Activated T-helper 2 cell treated with anti-CD3 and anti-CD28 coated beads, Interferon-gamma antibody, Interleukin-2, Interleukin-4, amounts not matched to agents 10 μg/mL and 5 μg/mL and 100 μg/mL, durations not matched to agents 14 hours and 24 hours and 36 hours (primary cell): ENCODE measurements at regions of chr9 and their contacts with region 1.

Region 1: DNA sequence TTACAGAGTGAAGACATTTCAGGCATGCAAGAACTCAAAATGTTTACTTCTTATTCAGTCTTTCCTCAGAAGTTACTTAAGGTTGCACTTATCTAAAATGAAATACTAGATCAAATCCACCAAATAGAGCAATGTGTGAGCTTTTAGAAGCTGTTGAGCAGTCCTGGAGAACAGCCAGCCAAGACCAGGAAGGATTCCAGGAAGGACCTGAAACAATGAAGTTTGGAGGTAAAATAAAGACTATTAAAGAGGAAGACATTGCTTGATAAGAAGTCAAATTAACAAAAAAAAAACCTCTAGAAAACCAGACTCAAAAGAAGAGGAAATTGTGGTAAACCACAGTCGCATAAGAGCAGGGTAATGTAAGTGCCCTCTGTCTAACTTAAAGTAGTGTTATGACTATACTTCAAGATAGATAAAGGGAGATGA is 156.2 kb upstream of the S1PR3 start:
- DNase-seq: no peak
- H3K4me3 Mint-ChIP-seq: no peak overlapping the region
- H3K27ac Mint-ChIP-seq: no peak overlapping the region
- H3K4me1 Mint-ChIP-seq: peaks cover 19% of the 10 kb centered on the region
- H3K27me3 Mint-ChIP-seq: peaks cover 69% of the 10 kb centered on the region

Region 2: DNA sequence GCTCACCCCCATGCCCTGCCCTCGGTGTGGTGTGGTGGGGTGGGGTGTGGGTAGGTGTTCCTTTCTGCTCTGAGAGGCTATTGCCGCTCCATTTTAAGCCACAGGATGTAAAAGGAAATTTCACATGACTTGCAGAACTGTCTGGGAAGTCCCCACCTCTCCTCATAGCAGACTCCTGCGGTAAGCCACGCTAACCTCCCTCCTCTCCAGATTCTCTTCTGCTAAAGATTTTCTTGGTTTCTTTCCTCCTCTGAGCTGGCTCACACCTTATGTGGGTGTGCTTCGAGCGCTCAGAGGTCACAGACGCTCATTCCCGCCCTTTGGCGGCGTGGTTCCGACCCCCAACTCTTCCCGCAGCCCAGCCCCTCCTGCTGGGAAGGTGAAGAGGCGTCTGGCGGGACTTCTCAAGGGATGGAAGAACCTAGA is 827.8 kb before region 1 on chr9:
- intact Hi-C with region 1: loop called (anchors 10 kb)
- DNase-seq: no peak
- H3K4me3 Mint-ChIP-seq: no peak overlapping the region
- H3K27ac Mint-ChIP-seq: no peak overlapping the region
- H3K4me1 Mint-ChIP-seq: peaks cover 7% of the 10 kb centered on the region
- H3K27me3 Mint-ChIP-seq: peaks cover 12% of the 10 kb centered on the region

Region 3: DNA sequence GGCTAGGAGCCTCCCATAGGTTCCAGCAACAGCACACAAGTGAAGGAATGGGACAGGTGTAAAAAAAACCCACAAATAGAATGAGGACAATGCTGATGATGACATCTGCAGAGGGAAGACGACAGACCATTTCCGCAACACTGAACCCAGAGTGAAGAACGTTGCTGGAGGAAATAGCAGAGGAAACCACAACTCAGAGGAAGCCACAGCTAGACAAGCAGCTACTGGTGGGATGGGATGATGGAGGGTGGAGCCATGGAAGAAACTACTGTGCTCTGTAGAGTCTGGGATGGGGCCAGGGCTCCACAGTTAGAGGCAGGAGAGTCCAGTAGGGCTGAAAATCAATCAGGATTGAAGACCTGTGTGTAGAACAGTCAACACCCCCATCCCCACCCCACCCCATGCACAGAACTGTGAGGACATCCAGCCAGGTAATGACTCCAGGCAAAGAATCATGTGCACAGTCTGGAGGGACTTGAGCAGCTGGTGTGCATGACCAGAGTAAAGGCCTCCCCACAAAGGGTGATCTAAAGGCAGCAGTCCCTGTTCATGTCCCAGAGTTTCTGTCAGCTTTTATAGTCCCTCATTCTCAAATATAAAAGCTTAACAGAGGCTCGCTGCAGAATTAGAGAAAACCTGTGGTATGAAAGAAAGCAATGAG is 512.0 kb before region 1 on chr9:
- intact Hi-C with region 1: loop called (anchors 10 kb)
- DNase-seq: peak; percentile 71
- H3K4me3 Mint-ChIP-seq: peak overlapping the region; percentile 1
- H3K27ac Mint-ChIP-seq: peak overlapping the region; percentile 83
- H3K4me1 Mint-ChIP-seq: peaks cover 46% of the 10 kb centered on the region
- H3K27me3 Mint-ChIP-seq: peaks cover 6% of the 10 kb centered on the region

Region 4: DNA sequence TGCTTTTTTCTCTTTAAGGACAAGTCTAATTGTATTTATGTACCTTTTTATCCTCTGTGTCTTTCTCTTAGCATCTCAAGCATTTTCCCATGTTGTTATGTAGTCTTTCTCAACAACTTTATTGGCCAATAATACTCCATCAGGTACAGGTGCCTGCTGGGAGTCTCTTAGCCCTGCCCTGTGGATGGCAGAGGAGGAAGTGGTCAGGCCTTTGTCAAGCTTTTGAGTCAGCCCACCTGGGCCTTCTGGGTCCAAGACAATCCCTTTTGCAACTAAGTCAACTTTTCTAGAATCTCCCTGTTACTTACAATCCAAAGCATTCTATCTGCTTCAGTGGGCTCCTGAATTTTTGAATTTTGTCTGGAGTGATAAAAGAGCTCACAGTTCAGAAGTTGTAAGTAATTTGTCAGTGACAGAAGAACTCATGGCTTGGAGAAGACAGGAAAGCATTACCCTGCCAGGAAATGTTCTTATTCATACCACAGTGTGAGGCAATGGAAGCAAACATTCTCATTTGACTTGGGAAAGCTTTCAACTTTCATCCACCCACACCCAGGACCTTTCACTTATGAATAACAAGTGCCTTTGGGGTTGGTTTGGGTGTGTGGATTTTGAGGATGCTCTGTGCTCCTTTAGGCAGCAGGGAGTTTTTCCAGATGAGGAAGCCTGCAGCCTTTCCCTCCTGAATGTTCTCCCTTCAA is 43.8 kb before region 1 on chr9:
- intact Hi-C with region 1: no loop called
- DNase-seq: no peak
- H3K4me3 Mint-ChIP-seq: no peak overlapping the region
- H3K27ac Mint-ChIP-seq: no peak overlapping the region
- H3K4me1 Mint-ChIP-seq: peaks cover 12% of the 10 kb centered on the region
- H3K27me3 Mint-ChIP-seq: peaks cover 7% of the 10 kb centered on the region

Region 5: GRCh38 chr9:88988796-88989560 is 153.9 kb after region 1 on chr9:
- intact Hi-C with region 1: loop called (anchors 5 kb)
- DNase-seq: no peak
- H3K4me3 Mint-ChIP-seq: peak overlapping the region; percentile 64
- H3K27ac Mint-ChIP-seq: peak overlapping the region; percentile 90
- H3K4me1 Mint-ChIP-seq: peaks cover 51% of the 10 kb centered on the region
- H3K27me3 Mint-ChIP-seq: peaks cover 13% of the 10 kb centered on the region